Prostate gland (tissue), 2 donors: ENCODE measurements at regions of chr10 and their contacts with region 1.

Region 1: DNA sequence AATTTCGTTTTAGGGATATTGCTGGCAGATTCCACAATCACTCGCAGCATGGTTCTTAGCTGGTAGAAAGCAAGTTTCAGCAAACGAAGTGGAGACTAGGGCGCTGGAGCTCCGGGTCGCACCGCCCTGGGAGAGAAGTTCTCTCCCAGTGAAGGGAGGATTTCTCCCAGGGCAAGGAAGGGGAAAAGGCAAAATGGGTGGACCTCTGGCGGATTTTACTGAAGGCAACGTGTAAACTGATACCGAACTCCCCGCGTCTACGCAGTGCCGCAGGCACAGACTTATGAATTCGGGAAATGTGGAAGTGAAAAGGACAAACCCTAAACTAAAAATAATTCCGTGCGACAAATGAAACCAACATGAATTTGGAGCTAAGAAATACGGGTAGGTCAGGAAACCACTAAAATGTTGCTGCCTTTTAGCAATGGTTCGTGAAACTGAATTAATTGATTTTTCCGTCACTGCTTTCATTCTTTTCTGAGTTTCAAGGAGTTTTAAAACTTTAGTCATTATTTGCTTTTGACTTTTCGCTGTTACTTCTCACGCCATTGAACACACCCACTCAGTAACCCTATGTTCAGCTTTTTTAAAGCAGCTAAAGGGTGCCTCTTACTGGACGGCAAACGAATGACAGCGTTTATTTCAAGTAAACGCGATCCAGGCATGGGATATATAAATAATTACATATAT is at the start of gene MYOF:
- DNase-seq: peak; percentile 70
- H3K4me3 ChIP-seq: peak within 1 kb of the TSS; percentile 35 to 44
- H3K27ac ChIP-seq: peak within 1 kb of the TSS; percentile 88
- H3K4me1 ChIP-seq: no peaks in the 10 kb centered on the region
- H3K27me3 ChIP-seq: no peaks in the 10 kb centered on the region
- CTCF ChIP-seq: peak; percentile 5 to 79 (median 64)
- POLR2A ChIP-seq: peak; percentile 70
- total RNA-seq, gene MYOF: 84.4 to 85.0 TPM

Region 2: GRCh38 chr10:93376372-93377293 is 105.7 kb before region 1 on chr10:
- intact Hi-C with region 1: loop called (anchors 1 kb)
- DNase-seq: peak; percentile 69
- H3K4me3 ChIP-seq: no peak overlapping the region
- H3K27ac ChIP-seq: peak overlapping the region; percentile 70 to 76
- H3K4me1 ChIP-seq: no peaks in the 10 kb centered on the region
- H3K27me3 ChIP-seq: no peaks in the 10 kb centered on the region
- CTCF ChIP-seq: peak; percentile 84 to 97 (median 96)
- POLR2A ChIP-seq: no peak

Region 3: GRCh38 chr10:93437088-93437945 is 45.0 kb before region 1 on chr10:
- intact Hi-C with region 1: loop called (anchors 2 kb)
- DNase-seq: peak; percentile 84
- H3K4me3 ChIP-seq: no peak overlapping the region
- H3K27ac ChIP-seq: peak overlapping the region; percentile 89 to 96
- H3K4me1 ChIP-seq: peaks cover 22% of the 10 kb centered on the region
- H3K27me3 ChIP-seq: no peaks in the 10 kb centered on the region
- CTCF ChIP-seq: no peak
- POLR2A ChIP-seq: peak; percentile 19

Region 4: DNA sequence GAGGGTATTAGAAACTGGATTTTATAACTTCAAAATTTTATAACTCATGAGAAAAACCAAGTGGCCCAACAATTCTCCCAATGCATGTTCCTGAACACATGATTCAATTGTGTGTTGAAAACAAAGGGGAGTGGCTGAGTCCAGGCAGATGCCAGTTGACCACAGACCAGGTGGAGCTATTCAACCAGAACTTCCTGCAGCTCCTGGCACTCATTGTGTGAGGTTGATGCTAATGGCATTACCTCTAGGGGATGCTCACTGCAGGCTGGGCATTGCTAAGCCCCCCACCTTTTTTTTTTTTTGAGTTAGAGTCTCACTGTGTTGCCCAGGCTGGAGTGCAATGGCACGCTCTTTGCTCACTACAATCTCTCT is 20.5 kb before region 1 on chr10:
- intact Hi-C with region 1: loop called (anchors 2 kb)
- DNase-seq: no peak
- H3K4me3 ChIP-seq: no peak overlapping the region
- H3K27ac ChIP-seq: peak overlapping the region; percentile 43 to 44
- H3K4me1 ChIP-seq: peaks cover 21% of the 10 kb centered on the region
- H3K27me3 ChIP-seq: no peaks in the 10 kb centered on the region
- CTCF ChIP-seq: no peak
- POLR2A ChIP-seq: no peak